ENCODE measurements at regions of chr1 and their contacts with region 1.

Region 1: GRCh38 chr1:109397538-109398342 is at the start of gene SORT1:
- DNase-seq: peak; percentile 97
- ATAC-seq: peak; percentile 99
- H3K4me3 Mint-ChIP-seq: peak within 1 kb of the TSS; percentile 95
- H3K27ac Mint-ChIP-seq: peak within 1 kb of the TSS; percentile 97
- H3K4me1 Mint-ChIP-seq: peaks cover 43% of the 10 kb centered on the region
- H3K27me3 Mint-ChIP-seq: no peaks in the 10 kb centered on the region
- CTCF ChIP-seq: no peak
- total RNA-seq, gene SORT1: 50.2 to 60.8 TPM (median 55.9 TPM) in 3 replicates

Region 2: DNA sequence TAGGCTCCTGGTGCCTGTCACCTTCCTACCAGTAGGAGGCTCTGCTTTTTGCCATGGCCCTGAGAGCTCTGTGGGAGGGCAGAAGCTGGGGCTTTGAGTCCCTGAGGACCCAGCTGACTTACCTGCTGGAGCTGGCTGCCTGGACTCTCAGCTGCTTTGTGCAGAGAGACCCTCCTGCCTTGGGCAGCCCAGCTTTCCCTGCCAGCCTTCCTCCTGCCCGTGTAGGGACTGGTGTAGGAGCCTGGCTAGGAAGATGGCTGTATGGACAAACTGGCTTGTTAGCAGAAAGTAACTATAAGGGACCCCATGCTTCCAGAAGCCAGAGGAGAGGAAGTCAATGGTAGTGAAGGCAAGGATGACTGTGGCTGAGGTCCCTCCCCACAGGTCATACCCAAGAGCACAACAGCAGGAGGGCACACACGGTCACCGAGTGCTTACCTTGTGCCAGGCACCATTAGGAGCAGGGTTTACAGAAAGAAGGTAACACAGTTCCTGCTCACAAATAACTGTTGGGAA is 158.1 kb before region 1 on chr1:
- CTCF ChIA-PET with region 1: interaction called, 21 read pairs
- POLR2A ChIA-PET with region 1: interaction called, 5 read pairs
- DNase-seq: peak; percentile 76
- ATAC-seq: no peak; the same call in 1 of the 2 replicates
- H3K4me3 Mint-ChIP-seq: peak overlapping the region; percentile 22; the same call in 1 of the 2 replicates
- H3K27ac Mint-ChIP-seq: peak overlapping the region; percentile 92
- H3K4me1 Mint-ChIP-seq: peaks cover 54% of the 10 kb centered on the region
- H3K27me3 Mint-ChIP-seq: no peaks in the 10 kb centered on the region; the same call in 1 of the 2 replicates
- CTCF ChIP-seq: peak; percentile 48

Region 3: GRCh38 chr1:109263597-109264398 is 133.9 kb before region 1 on chr1:
- CTCF ChIA-PET with region 1: interaction called, 20 read pairs
- POLR2A ChIA-PET with region 1: no interaction called
- DNase-seq: peak; percentile 96
- ATAC-seq: peak; percentile 93
- H3K4me3 Mint-ChIP-seq: no peak overlapping the region
- H3K27ac Mint-ChIP-seq: no peak overlapping the region
- H3K4me1 Mint-ChIP-seq: peaks cover 21% of the 10 kb centered on the region
- H3K27me3 Mint-ChIP-seq: no peaks in the 10 kb centered on the region
- CTCF ChIP-seq: peak; percentile 97

Region 4: DNA sequence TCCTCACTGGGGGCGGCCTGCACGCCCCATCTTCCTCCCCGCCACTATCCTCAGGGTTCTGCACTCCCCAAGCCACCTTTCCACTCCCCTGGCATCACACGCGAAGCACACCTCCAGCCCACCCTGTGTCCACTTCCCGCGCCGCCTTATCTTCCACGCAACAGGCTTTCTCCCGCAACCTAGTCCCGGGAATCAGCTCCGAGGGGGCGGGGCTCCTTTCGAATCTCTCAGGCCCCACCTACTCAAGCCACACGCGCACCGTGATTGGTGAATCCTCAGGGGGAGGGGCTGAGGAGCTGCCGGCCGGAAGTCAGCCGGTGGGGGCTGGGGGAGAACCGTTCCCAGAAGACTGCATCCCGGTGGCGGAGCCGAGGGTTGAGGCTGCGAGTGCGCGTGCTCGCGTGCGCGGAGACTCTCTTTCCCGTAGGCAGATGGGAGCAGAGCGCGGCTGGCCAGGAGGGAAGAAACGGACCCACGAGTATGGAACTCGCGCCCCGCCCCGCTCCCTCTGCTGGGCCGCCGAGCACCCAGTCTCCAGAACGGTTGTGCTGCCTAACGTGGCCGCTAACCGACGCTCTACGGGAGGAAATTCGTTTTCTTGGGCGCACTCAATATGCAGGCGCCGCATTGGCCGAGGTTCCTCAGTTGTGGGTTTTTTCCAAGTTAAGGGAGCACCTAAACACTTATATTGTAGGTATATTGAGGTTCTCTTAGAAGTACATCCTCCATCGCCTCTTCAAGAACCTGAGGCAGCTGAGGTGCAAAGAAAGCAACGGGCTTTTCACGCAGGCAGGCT is 114.6 kb before region 1 on chr1 and contains the start of gene PSRC1:
- CTCF ChIA-PET with region 1: interaction called, 68 read pairs
- POLR2A ChIA-PET with region 1: interaction called, 21 read pairs
- DNase-seq: peak; percentile 96
- ATAC-seq: peak; percentile 92
- H3K4me3 Mint-ChIP-seq: peak within 1 kb of the TSS; percentile 99
- H3K27ac Mint-ChIP-seq: peak within 1 kb of the TSS; percentile 97
- H3K4me1 Mint-ChIP-seq: peaks cover 42% of the 10 kb centered on the region
- H3K27me3 Mint-ChIP-seq: no peaks in the 10 kb centered on the region; the same call in 1 of the 2 replicates
- CTCF ChIP-seq: no peak
- total RNA-seq, gene PSRC1: 56.9 to 68.4 TPM (median 64.1 TPM) in 3 replicates

Region 5: GRCh38 chr1:109347511-109347910 is 50.2 kb before region 1 on chr1:
- CTCF ChIA-PET with region 1: interaction called, 10 read pairs
- POLR2A ChIA-PET with region 1: interaction called, 3 read pairs
- DNase-seq: no peak
- ATAC-seq: no peak
- H3K4me3 Mint-ChIP-seq: no peak overlapping the region
- H3K27ac Mint-ChIP-seq: no peak overlapping the region
- H3K4me1 Mint-ChIP-seq: no peaks in the 10 kb centered on the region
- H3K27me3 Mint-ChIP-seq: no peaks in the 10 kb centered on the region
- CTCF ChIP-seq: no peak

Region 6: GRCh38 chr1:109370712-109371455 is 26.9 kb before region 1 on chr1:
- CTCF ChIA-PET with region 1: interaction called, 11 read pairs
- POLR2A ChIA-PET with region 1: interaction called, 3 read pairs
- DNase-seq: no peak
- ATAC-seq: no peak
- H3K4me3 Mint-ChIP-seq: no peak overlapping the region
- H3K27ac Mint-ChIP-seq: peak overlapping the region; percentile 43
- H3K4me1 Mint-ChIP-seq: peaks cover 34% of the 10 kb centered on the region
- H3K27me3 Mint-ChIP-seq: no peaks in the 10 kb centered on the region
- CTCF ChIP-seq: no peak

Region 7: GRCh38 chr1:109441069-109441468 is 43.3 kb after region 1 on chr1:
- CTCF ChIA-PET with region 1: no interaction called
- POLR2A ChIA-PET with region 1: no interaction called
- DNase-seq: no peak
- ATAC-seq: no peak
- H3K4me3 Mint-ChIP-seq: no peak overlapping the region
- H3K27ac Mint-ChIP-seq: no peak overlapping the region
- H3K4me1 Mint-ChIP-seq: no peaks in the 10 kb centered on the region
- H3K27me3 Mint-ChIP-seq: peaks cover 10% of the 10 kb centered on the region
- CTCF ChIP-seq: no peak

Region 8: DNA sequence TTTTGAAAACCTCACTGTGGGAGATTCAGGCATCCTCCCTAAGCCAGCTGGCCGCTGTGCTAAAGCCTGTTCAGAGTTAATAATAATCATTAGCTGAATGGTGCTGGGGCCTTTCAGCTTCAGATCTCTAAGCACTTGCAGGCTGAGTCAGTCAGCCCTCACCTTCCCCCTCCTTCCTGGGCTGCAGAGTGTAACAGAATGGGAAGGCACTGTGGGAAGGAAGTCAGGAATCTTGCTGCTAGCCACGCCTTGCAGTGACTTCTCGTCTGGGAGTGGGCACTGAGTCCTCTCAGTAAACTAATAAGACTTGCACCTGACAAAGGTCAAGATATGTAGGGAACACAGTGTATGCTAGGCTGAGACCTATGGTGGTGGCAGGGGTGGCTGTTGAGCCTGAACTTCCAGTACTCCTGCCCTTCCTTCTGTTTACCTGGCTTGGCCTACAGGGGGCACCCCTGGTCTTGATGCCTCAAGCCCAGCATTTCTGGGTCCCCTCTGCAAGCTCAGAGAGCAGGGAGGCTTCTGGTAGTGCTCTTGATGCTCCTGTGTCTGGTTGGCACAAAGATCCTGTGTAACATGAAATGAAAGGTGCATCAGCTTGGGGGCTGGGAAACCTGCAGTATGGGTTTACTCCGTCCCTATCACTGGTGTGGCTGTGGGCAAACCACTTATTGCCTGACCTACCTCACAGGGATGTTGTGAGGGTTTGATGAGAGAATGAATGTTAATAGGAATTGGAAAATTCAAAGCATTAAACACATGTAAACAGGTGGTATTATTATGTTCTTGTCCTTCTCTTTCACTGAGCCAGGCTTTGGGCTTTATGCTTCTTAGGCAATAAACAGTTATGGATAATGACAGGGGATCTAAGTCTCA is 102.2 kb after region 1 on chr1:
- CTCF ChIA-PET with region 1: interaction called, 10 read pairs
- POLR2A ChIA-PET with region 1: no interaction called
- DNase-seq: peak; percentile 89
- ATAC-seq: peak; percentile 77
- H3K4me3 Mint-ChIP-seq: no peak overlapping the region
- H3K27ac Mint-ChIP-seq: 0 out of 2 replicates have a peak overlapping the region, but pooled peaks have one; percentile 23
- H3K4me1 Mint-ChIP-seq: peaks cover 28% of the 10 kb centered on the region
- H3K27me3 Mint-ChIP-seq: no peaks in the 10 kb centered on the region
- CTCF ChIP-seq: peak; percentile 40; the same call in 1 of the 2 replicates

Measured in WTC11 (cell line).